Heart left ventricle (tissue), 16 donors: ENCODE measurements at regions of chr19 and their contacts with region 1.

Region 1: DNA sequence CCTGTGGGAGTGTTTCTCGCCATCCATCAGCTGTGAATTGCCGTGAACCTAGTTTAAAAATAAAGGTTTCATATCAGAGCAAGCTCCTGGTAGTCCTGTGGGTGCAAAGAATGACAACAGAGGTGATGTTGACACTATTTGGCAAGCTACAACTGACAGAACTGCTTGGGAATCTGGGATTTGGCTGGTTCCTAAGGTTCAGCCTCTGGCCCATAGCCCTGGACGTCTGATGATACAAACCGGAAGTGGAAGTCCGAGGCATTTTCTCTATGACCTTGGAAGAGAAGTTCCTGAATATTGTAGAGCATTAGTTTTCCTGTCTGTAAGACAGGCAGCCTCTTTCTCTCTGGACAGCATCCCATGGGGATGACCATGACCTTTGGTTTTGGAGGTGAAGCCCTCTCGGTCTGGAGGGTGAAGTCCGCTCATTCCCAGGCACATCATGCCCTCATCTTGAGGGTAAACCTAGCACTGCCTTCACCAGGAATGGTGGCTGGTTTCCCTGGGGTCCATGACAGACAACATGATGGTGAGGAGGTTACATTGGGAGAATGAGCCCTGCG is 29.1 kb downstream of the GATAD2A start:
- DNase-seq: peak; percentile 12 to 74 (median 59)
- ATAC-seq: peak; percentile 73 to 90 (median 88)
- H3K4me3 ChIP-seq: no peak overlapping the region
- H3K27ac ChIP-seq: peak overlapping the region in 11 of 12 donors; percentile 56 to 93 (median 76)
- H3K4me1 ChIP-seq: peaks cover 8 to 83% (median 55%) of the 10 kb centered on the region in 12 donors
- H3K27me3 ChIP-seq: no peaks in the 10 kb centered on the region
- CTCF ChIP-seq: no peak
- POLR2A ChIP-seq: no peak

Region 2: DNA sequence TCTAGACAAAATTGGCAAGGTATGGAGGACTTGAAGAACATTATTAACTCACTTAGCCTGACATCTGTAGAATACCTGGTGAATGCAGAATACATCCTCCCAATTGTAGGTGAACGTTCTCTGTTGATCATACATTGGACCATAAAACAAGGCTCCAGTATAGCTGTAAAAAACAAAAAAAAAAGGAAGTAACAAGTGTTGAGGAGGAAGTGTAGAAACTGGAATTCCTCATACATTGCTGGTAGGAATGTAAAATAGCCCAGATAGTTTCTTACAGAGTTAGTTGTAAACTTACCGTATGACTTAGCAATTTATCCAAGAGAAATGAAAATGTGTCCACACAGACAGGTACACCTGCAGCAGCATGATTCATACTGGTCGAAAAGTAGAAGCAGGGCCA is 36.0 kb after region 1 on chr19:
- intact Hi-C with region 1: loop called in 1 of 10 experiments (anchors 5 kb)
- DNase-seq: no peak
- ATAC-seq: no peak
- H3K4me3 ChIP-seq: no peak overlapping the region
- H3K27ac ChIP-seq: peak overlapping the region in 1 of 12 donors; percentile 59
- H3K4me1 ChIP-seq: peaks cover 0 to 33% (median 8%) of the 10 kb centered on the region in 12 donors
- H3K27me3 ChIP-seq: no peaks in the 10 kb centered on the region
- CTCF ChIP-seq: no peak
- POLR2A ChIP-seq: no peak

Region 3: DNA sequence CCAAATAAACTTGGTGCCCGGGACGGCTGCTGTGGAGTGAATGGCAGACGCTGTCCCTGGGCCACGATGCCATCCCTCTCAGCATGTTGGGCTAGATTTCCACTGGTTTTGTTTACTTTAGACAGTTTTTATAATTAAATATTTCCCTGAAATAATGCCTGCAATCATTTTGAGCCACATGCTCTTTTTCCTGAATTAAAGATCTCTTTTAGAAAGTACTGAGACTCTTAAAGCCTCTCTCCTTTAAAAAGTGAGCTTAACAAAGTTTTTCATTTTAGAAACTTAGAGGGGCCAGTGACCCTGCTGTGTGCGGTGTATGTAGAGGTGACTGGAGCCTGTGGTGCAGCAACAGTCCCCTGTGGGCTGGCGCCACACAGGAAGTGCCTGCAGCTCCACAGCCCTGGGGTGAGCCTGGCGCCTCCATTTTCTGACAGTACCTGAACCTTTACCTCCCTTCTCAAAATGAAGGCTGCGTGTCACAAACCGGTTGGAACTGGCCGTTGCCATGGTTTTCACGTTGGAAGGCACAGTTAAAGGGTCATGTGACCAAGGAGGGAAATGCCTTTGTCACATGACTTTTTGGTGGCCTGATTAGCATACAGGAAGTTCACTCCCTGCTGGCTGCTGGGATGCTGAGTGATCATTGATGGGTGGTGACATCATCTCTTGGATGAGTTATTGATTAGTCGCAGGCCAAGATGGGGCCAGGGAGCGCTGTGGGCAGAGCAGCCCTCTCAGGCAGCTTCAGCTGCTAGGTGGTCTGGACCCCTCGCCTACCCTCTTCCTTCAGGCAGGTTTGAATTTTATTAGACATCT is 54.5 kb after region 1 on chr19:
- intact Hi-C with region 1: no loop called
- DNase-seq: peak; percentile 77 to 84 (median 79)
- ATAC-seq: peak; percentile 10 to 68 (median 56)
- H3K4me3 ChIP-seq: peak overlapping the region in 8 of 12 donors; percentile 1 to 40 (median 25)
- H3K27ac ChIP-seq: peak overlapping the region; percentile 38 to 94 (median 70)
- H3K4me1 ChIP-seq: peaks cover 10 to 60% (median 45%) of the 10 kb centered on the region in 12 donors
- H3K27me3 ChIP-seq: no peaks in the 10 kb centered on the region
- CTCF ChIP-seq: no peak
- POLR2A ChIP-seq: no peak